ENCODE measurements at regions of chr21 and their contacts with region 1.

Region 1: DNA sequence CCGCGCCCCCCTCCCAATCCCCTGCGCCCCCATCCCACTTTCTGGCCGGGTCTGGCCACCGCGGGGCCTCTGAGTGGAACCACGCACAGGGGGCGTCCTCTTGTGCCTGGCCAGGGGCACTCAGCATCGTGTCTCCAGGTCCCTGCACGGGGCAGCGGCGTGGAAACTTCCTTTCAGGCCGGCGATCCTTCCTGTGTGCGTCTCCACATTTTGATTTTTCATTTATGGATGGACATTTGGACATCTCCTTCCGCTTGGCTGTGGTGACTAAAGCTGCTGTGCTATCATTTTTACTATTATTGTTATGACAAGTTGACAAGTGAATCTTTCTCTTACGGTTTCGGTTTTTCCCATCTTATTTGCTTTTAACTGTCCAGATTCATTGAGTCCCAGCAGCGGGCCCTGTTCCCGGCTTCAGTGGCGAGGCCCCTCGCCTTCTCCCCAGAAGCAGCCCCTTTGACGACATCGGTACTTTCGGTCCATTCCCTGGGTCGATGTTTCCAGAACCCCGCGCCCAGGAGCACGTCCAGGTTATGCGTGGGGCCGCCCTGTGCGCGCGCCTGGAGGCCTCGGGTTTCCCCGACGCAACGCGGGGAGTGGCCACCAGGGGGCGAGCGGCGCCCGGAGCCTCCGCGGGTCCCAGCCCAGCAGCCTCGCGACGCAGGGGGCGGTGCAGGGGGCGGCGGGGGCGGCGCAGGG is 12.4 kb upstream of the SLC19A1 start:
- DNase-seq: peak; percentile 87
- H3K4me3 ChIP-seq: peak overlapping the region; percentile 46 to 63
- H3K27ac ChIP-seq: peak overlapping the region; percentile 65 to 87
- H3K4me1 ChIP-seq: peaks cover 5% of the 10 kb centered on the region
- H3K27me3 ChIP-seq: no peaks in the 10 kb centered on the region
- CTCF ChIP-seq: peak; percentile 81 to 98 (median 91)
- POLR2A ChIP-seq: no peak

Region 2: DNA sequence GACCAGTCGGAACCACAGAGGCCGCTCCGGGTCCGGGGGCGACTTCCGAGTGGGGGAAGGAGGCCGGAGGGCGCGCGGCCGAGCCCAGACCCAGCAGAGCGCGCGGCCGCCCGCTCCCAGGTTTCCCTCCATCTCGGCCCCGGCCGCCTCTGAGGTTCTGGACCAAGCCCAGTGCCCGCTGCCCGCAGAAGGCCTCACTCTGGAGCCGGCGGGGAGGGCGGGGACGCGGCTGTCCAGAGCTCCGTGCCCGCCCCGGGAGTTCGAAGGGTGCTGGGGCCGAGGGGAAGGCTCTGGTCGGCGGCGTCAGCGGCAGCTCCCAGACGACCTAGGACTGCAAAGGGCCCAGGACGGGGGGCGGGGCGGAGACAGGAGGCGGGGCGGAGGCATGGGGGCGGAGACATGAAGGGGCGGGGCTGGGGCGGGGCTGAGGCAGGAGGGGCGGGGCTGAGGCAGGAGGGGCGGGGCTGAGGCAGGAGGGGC is 35.7 kb after region 1 on chr21:
- intact Hi-C with region 1: loop called (anchors 5 kb)
- DNase-seq: peak; percentile 84
- H3K4me3 ChIP-seq: peak overlapping the region; percentile 58 to 69
- H3K27ac ChIP-seq: peak overlapping the region; percentile 29 to 65
- H3K4me1 ChIP-seq: no peaks in the 10 kb centered on the region
- H3K27me3 ChIP-seq: no peaks in the 10 kb centered on the region
- CTCF ChIP-seq: no peak
- POLR2A ChIP-seq: no peak

Region 3: DNA sequence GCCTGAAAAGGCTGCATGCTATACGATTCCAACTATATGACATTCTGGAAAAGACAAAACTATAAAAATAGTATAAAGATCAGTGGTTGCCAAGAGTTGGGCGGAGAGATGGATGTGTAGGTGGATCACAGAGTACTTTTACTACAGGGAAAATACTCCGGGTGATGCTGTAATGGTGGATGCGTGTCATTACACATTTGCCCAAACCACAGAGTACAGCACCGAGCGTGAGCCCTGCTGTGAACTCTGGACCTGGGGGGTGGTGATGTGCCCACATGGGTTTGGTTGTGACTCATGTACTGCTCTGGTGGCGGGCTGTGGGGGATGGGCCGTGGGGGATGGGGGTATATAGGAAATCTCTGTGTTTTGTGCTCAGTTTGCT is 264.3 kb after region 1 on chr21:
- intact Hi-C with region 1: loop called (anchors 10 kb)
- DNase-seq: no peak
- H3K4me3 ChIP-seq: no peak overlapping the region
- H3K27ac ChIP-seq: no peak overlapping the region
- H3K4me1 ChIP-seq: peaks cover 8% of the 10 kb centered on the region
- H3K27me3 ChIP-seq: no peaks in the 10 kb centered on the region
- CTCF ChIP-seq: no peak
- POLR2A ChIP-seq: no peak